A673 (cell line): ENCODE measurements at regions of chr11 and their contacts with region 1.

Region 1: DNA sequence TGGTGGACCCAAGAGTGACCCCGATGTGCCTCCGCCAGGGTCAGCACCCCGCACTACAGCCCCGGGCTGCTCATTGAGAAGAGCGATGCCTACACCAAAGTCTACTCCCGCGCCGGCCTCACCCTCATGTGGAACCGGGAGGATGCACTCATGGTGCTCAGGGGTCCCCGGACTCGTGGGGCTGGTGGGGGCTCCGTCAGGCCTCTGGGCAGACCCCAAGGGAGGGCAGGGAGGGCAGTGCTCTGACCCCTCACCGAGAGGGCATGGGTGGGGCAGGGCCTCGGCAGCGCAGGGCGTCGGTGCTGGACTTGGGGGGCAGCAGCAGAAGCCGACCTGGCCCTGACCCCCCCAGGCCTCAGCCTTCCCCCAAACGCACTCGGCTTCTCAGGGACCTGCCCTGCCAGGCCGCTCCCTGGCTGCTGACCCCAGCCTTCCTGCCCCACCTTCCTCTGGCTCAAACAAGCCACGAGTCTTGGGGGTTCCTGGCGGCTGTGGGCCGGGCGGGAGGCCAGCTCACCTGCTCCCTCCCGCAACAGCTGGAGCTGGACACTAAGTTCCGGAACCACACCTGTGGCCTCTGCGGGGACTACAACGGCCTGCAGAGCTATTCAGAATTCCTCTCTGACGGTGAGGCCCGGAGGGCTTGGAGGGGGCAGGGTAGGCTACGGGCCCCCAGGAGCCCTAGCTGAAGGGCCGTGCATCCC is 2.9 kb downstream of the MUC2 start:
- DNase-seq: no peak
- H3K4me3 ChIP-seq: no peak overlapping the region
- H3K27ac ChIP-seq: no peak overlapping the region
- H3K4me1 ChIP-seq: no peaks in the 10 kb centered on the region
- H3K27me3 ChIP-seq: no peaks in the 10 kb centered on the region
- CTCF ChIP-seq: no peak

Region 2: DNA sequence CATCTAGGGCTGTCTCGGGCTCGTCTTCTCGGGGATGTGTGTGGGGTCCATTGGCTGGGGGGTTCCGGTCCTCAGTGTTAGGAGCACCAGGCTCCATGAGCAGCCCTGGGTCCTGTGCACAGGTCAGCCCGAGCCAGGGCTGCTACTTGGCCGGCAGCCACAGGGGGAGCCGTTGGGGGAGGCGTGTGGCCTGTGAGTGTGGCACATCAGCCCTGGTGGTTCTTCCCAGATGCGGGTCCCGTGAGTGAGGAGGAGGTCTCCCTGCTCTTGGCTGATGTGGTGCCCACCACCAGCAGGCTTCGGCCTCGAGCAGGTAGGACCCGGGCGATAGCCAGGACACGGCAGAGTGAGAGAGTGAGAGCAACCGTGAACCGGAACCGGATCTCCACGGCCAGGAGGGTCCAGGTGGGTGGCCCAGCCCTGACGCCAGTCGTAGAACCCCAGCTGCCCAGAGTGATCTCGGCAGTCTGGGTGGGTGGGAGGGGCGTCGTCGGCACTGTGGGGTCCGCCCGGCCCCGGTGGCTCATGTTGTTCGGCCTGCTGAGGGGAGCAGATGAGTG is 480.3 kb before region 1 on chr11:
- CTCF ChIA-PET with region 1: no interaction called
- POLR2A ChIA-PET with region 1: interaction called, 14 read pairs
- intact Hi-C with region 1: no loop called
- DNase-seq: no peak
- H3K4me3 ChIP-seq: no peak overlapping the region
- H3K27ac ChIP-seq: no peak overlapping the region
- H3K4me1 ChIP-seq: no peaks in the 10 kb centered on the region
- H3K27me3 ChIP-seq: no peaks in the 10 kb centered on the region
- CTCF ChIP-seq: no peak

Region 3: GRCh38 chr11:797296-798092 is 280.1 kb before region 1 on chr11:
- CTCF ChIA-PET with region 1: no interaction called
- POLR2A ChIA-PET with region 1: no interaction called
- intact Hi-C with region 1: no loop called
- DNase-seq: peak; percentile 93
- H3K4me3 ChIP-seq: peak overlapping the region; percentile 75
- H3K27ac ChIP-seq: peak overlapping the region; percentile 89
- H3K4me1 ChIP-seq: peaks cover 7% of the 10 kb centered on the region
- H3K27me3 ChIP-seq: no peaks in the 10 kb centered on the region
- CTCF ChIP-seq: no peak